Natural killer cell (primary cell): ENCODE measurements at regions of chr3 and their contacts with region 1.

Region 1: GRCh38 chr3:152258448-152259393 is 10.0 kb upstream of the MBNL1 start:
- DNase-seq: peak; percentile 62 to 78
- ATAC-seq: peak; percentile 62 to 81 (median 79)
- H3K4me3 ChIP-seq: no peak overlapping the region
- H3K4me3 Mint-ChIP-seq: peak overlapping the region; percentile 73
- H3K27ac ChIP-seq: peak overlapping the region; percentile 94
- H3K27ac Mint-ChIP-seq: peak overlapping the region; percentile 79 to 96
- H3K4me1 ChIP-seq: peaks cover 43% of the 10 kb centered on the region
- H3K4me1 Mint-ChIP-seq: peaks cover 83 to 84% of the 10 kb centered on the region in 2 donors
- H3K27me3 ChIP-seq: no peaks in the 10 kb centered on the region
- H3K27me3 Mint-ChIP-seq: no peaks in the 10 kb centered on the region
- CTCF ChIP-seq: no peak

Region 2: DNA sequence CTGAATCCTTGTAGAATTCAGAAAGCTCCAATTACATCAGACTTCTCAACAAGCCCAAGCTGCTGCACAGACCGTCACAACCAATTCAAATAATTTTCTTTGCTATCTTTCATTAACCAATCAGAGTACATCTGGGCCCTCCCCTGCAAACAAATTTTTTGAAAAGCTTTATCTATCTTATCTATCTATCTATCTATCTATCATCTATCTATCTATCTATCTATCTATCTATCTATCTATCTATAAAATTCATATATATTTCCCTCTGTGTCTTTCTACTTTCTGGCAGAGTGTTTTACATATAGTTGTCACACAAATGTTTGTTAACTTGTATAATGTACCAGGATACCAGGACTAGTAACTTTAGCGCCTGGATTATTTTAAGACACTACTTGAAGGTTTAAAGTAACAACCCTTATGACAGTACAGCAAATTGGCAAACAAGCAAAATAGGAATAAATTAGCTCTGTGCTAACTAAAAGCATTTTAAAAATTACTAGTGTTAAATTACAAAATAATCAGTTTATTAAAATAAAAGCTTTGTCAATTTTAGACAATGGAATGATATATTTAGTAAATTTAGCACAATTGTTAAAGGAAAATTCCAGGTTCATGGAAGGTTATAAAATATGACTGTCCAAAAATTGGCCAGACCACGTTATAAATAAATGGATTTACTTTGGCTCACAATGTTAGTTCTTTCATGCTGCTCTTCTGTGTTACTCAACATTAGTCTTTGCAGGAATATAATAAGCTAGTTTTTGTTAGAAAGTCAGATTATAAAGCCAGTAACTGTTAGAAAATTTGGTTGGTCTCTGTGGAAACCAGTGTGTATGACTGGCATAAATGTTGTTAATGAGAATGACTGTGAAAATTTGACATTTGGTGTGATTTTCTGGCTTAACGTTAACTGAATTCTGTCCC is 246.6 kb before region 1 on chr3:
- intact Hi-C with region 1: no loop called
- DNase-seq: no peak
- ATAC-seq: no peak
- H3K4me3 ChIP-seq: no peak overlapping the region
- H3K4me3 Mint-ChIP-seq: no peak overlapping the region
- H3K27ac ChIP-seq: no peak overlapping the region
- H3K27ac Mint-ChIP-seq: no peak overlapping the region
- H3K4me1 ChIP-seq: no peaks in the 10 kb centered on the region
- H3K4me1 Mint-ChIP-seq: no peaks in the 10 kb centered on the region
- H3K27me3 ChIP-seq: peaks cover 2% of the 10 kb centered on the region
- H3K27me3 Mint-ChIP-seq: peaks cover 2 to 17% of the 10 kb centered on the region in 2 donors
- CTCF ChIP-seq: no peak

Region 3: GRCh38 chr3:152193673-152194267 is 65.0 kb before region 1 on chr3:
- intact Hi-C with region 1: loop called (anchors 5 kb)
- DNase-seq: peak in 1 of 2 donors; percentile 78
- ATAC-seq: peak; percentile 74 to 80 (median 79)
- H3K4me3 ChIP-seq: peak overlapping the region; percentile 50
- H3K4me3 Mint-ChIP-seq: peak overlapping the region; percentile 84
- H3K27ac ChIP-seq: peak overlapping the region; percentile 84
- H3K27ac Mint-ChIP-seq: peak overlapping the region; percentile 85
- H3K4me1 ChIP-seq: peaks cover 20% of the 10 kb centered on the region
- H3K4me1 Mint-ChIP-seq: peaks cover 66% of the 10 kb centered on the region in 2 donors
- H3K27me3 ChIP-seq: no peaks in the 10 kb centered on the region
- H3K27me3 Mint-ChIP-seq: no peaks in the 10 kb centered on the region
- CTCF ChIP-seq: no peak

Region 4: GRCh38 chr3:152309535-152310307 is 51.0 kb after region 1 on chr3:
- intact Hi-C with region 1: loop called (anchors 2 kb)
- DNase-seq: peak in 1 of 2 donors; percentile 54
- ATAC-seq: peak; percentile 73 to 79 (median 75)
- H3K4me3 ChIP-seq: no peak overlapping the region
- H3K4me3 Mint-ChIP-seq: peak overlapping the region; percentile 15
- H3K27ac ChIP-seq: peak overlapping the region; percentile 18
- H3K27ac Mint-ChIP-seq: peak overlapping the region; percentile 81 to 91
- H3K4me1 ChIP-seq: peaks cover 16% of the 10 kb centered on the region
- H3K4me1 Mint-ChIP-seq: peaks cover 63 to 75% of the 10 kb centered on the region in 2 donors
- H3K27me3 ChIP-seq: no peaks in the 10 kb centered on the region
- H3K27me3 Mint-ChIP-seq: no peaks in the 10 kb centered on the region
- CTCF ChIP-seq: no peak

Region 5: GRCh38 chr3:152405915-152406802 is 147.4 kb after region 1 on chr3:
- intact Hi-C with region 1: no loop called
- DNase-seq: no peak
- ATAC-seq: no peak
- H3K4me3 ChIP-seq: no peak overlapping the region
- H3K4me3 Mint-ChIP-seq: no peak overlapping the region
- H3K27ac ChIP-seq: no peak overlapping the region
- H3K27ac Mint-ChIP-seq: peak overlapping the region; percentile 83 to 91
- H3K4me1 ChIP-seq: peaks cover 22% of the 10 kb centered on the region
- H3K4me1 Mint-ChIP-seq: peaks cover 64 to 71% of the 10 kb centered on the region in 2 donors
- H3K27me3 ChIP-seq: no peaks in the 10 kb centered on the region
- H3K27me3 Mint-ChIP-seq: no peaks in the 10 kb centered on the region
- CTCF ChIP-seq: no peak